Activated CD4-positive, alpha-beta T cell treated with anti-CD3 and anti-CD28 coated beads for 36 hours (primary cell): ENCODE measurements at regions of chr1 and their contacts with region 1.

Region 1: GRCh38 chr1:185317034-185317885 is at the start of gene IVNS1ABP:
- DNase-seq: peak; percentile 97
- ATAC-seq: peak; percentile 81
- H3K4me3 Mint-ChIP-seq: peak within 1 kb of the TSS; percentile 84
- H3K27ac Mint-ChIP-seq: peak within 1 kb of the TSS; percentile 99
- H3K4me1 Mint-ChIP-seq: peaks cover 38% of the 10 kb centered on the region
- H3K27me3 Mint-ChIP-seq: no peaks in the 10 kb centered on the region
- total RNA-seq, gene IVNS1ABP: 116 to 129 TPM

Region 2: DNA sequence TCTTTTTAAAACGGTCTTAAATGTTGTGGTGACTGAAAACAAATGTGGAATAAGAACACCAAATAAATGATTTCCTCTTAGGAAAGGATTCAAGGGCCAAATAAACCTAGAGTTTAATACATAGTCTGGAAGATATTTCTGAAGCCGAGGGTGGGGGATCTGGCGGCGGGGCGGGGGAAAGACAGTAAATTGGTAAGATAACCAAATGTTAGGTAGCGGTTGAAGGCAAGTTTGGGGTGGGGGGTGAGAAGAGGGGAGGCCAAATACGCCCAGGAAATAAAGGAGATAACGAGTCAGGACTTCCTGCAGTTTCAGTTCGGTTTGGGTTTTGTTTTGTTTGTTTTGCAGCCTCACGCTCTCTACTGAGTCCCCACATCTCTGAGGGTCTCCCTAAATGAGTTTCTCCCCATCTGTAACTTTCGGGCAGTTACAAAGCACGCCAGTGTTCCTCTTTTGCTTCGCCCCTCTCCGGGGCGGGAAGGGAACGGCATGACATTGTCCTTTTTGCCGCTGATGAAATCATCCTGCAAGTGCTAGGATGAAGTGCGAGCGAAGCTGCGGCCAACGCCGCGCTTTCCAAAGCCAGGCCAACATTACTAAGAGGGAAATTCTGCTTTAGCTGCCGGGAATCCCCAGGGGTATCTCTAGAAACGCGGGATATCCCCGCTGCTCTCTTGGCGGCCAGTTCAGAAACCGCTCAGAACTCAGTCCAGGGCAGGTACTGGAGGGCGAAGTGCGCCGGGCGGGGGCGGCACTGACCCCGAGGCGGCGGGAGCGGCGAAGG is 343.8 kb before region 1 on chr1:
- CTCF ChIA-PET with region 1: no interaction called
- POLR2A ChIA-PET with region 1: no interaction called
- intact Hi-C with region 1: loop called in 1 of 2 experiments (anchors 1 kb)
- DNase-seq: peak; percentile 84
- ATAC-seq: peak; percentile 63
- H3K4me3 Mint-ChIP-seq: peak overlapping the region; percentile 86
- H3K27ac Mint-ChIP-seq: peak overlapping the region; percentile 97
- H3K4me1 Mint-ChIP-seq: peaks cover 45% of the 10 kb centered on the region
- H3K27me3 Mint-ChIP-seq: peaks cover 16% of the 10 kb centered on the region

Region 3: GRCh38 chr1:185156854-185157598 is 160.2 kb before region 1 on chr1 and contains the starts of genes SWT1 and TRMT1L:
- CTCF ChIA-PET with region 1: interaction called, 3 read pairs
- POLR2A ChIA-PET with region 1: interaction called, 7 read pairs
- intact Hi-C with region 1: loop called (anchors 1 kb)
- DNase-seq: peak; percentile 99
- ATAC-seq: peak; percentile 94
- H3K4me3 Mint-ChIP-seq: peak within 1 kb of the TSS; percentile 91
- H3K27ac Mint-ChIP-seq: peak within 1 kb of the TSS; percentile 95
- H3K4me1 Mint-ChIP-seq: peaks cover 50% of the 10 kb centered on the region
- H3K27me3 Mint-ChIP-seq: no peaks in the 10 kb centered on the region
- total RNA-seq, gene SWT1: 3.0 to 3.3 TPM
- total RNA-seq, gene TRMT1L: 33.7 to 38.7 TPM

Region 4: DNA sequence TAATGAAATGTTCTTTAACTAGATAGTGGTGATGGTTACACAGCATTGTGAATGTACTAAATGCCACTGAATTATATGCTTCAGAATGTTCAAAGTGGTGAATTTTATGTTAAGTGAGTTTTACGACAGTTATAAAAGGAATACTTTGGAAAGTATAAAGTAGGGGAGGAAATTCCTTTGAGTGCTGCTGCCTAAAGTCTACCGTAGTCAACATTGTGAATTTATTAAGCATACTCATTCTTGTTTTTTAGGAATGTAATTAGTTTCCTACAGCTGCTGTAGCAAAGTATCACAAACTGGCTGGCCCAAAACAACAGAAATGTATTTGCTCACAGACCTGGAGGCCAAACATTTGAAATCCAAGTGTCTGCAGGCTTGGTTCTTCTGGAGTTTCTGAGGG is 87.3 kb before region 1 on chr1:
- CTCF ChIA-PET with region 1: no interaction called
- POLR2A ChIA-PET with region 1: no interaction called
- intact Hi-C with region 1: no loop called
- DNase-seq: no peak
- ATAC-seq: no peak
- H3K4me3 Mint-ChIP-seq: no peak overlapping the region
- H3K27ac Mint-ChIP-seq: no peak overlapping the region
- H3K4me1 Mint-ChIP-seq: no peaks in the 10 kb centered on the region
- H3K27me3 Mint-ChIP-seq: no peaks in the 10 kb centered on the region

Region 5: DNA sequence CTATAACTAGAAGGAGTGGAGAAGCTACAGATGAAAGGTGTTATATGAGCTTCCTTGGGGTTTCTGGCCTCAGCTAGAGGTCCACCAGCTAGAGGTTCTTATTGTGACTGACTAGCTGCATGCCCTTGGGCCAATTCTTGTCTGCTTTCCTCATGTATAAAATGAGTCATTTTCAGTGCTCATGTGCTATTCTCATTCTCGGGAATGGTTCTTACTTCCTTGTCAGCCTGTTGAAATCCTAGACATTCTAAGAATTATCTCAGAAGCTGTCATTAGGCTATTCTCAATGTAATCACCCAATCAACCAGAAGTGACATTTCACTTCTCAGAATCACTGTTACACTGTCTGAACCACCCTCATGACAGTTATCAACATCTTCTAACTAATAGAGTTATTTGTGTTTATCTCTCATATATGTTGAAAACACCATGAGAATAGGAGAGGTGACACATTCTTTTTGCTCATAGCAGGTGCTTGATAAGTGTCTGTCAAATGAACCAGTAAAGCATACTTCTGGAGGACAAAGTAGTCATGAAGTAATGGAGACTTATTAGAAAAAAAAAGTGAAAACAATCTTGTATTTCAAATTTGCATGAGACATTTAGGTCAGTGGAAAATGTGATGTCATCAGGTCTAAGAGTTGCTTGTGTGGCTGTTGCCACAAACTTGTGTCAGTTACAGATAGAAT is 122.6 kb after region 1 on chr1:
- CTCF ChIA-PET with region 1: no interaction called
- POLR2A ChIA-PET with region 1: interaction called, 6 read pairs
- intact Hi-C with region 1: loop called (anchors 1 to 2 kb)
- DNase-seq: peak; percentile 54
- ATAC-seq: peak; percentile 87
- H3K4me3 Mint-ChIP-seq: no peak overlapping the region
- H3K27ac Mint-ChIP-seq: no peak overlapping the region
- H3K4me1 Mint-ChIP-seq: peaks cover 7% of the 10 kb centered on the region
- H3K27me3 Mint-ChIP-seq: no peaks in the 10 kb centered on the region

Region 6: GRCh38 chr1:185636848-185637247 is 319.6 kb after region 1 on chr1:
- CTCF ChIA-PET with region 1: no interaction called
- POLR2A ChIA-PET with region 1: interaction called, 3 read pairs
- intact Hi-C with region 1: loop called in 1 of 2 experiments (anchors 1 kb)
- DNase-seq: peak; percentile 63
- ATAC-seq: peak; percentile 95
- H3K4me3 Mint-ChIP-seq: no peak overlapping the region
- H3K27ac Mint-ChIP-seq: peak overlapping the region; percentile 69
- H3K4me1 Mint-ChIP-seq: peaks cover 14% of the 10 kb centered on the region
- H3K27me3 Mint-ChIP-seq: no peaks in the 10 kb centered on the region

Region 7: DNA sequence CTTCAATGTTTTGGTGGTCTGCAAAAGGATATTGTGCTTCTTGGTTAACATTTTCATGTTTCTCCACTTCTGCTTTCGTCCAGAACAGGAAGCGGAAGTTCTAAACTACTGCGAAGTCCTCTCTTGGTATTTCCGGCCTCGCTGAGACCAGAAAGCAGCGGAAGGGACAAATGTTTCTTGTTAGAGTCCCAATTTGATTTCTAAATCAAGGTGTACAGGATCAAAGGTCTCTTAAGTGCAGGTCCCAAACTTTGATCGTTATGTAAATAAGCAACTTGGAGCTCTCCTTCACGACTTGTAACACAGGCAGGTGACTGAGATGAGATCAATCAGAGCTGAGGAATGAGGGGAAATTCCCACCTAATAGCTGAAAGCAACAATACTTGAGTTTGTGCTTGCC is 376.8 kb after region 1 on chr1:
- CTCF ChIA-PET with region 1: no interaction called
- POLR2A ChIA-PET with region 1: interaction called, 6 read pairs
- intact Hi-C with region 1: loop called in 1 of 2 experiments (anchors 5 kb)
- DNase-seq: peak; percentile 41
- ATAC-seq: peak; percentile 48
- H3K4me3 Mint-ChIP-seq: peak overlapping the region; percentile 65
- H3K27ac Mint-ChIP-seq: peak overlapping the region; percentile 91
- H3K4me1 Mint-ChIP-seq: peaks cover 18% of the 10 kb centered on the region
- H3K27me3 Mint-ChIP-seq: peaks cover 4% of the 10 kb centered on the region